ENCODE measurements at regions of chr19 and their contacts with region 1.

Region 1: GRCh38 chr19:53792721-53793433 is 31.2 kb downstream of the NLRP12 start:
- DNase-seq: peak; percentile 74 to 85
- ATAC-seq: peak in 3 of 4 donors; percentile 61 to 74 (median 68)
- H3K4me3 ChIP-seq: no peak overlapping the region
- H3K27ac ChIP-seq: no peak overlapping the region
- H3K4me1 ChIP-seq: no peaks in the 10 kb centered on the region
- H3K27me3 ChIP-seq: no peaks in the 10 kb centered on the region
- CTCF ChIP-seq: peak; percentile 83

Region 2: DNA sequence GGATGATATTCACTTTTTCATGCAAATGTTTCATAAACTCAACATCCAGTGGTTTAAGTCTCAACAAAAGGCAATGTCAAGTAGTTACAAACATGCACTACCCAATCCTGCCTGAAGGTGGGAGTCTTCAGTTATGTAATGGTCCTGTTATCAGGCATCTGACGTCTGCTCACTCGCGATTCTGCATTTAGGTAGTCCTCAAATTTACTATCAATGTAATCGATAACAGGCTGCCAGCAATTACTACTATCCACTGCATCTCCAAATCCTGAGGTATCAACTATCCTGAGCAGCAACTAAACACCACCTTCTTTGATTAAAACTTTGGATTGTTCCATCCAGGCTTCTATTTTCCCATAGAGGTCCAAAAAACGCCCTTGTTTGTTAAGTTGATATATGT is 19.9 kb before region 1 on chr19:
- intact Hi-C with region 1: loop called in 1 of 2 experiments (anchors 1 kb)
- DNase-seq: no peak
- ATAC-seq: no peak
- H3K4me3 ChIP-seq: no peak overlapping the region
- H3K27ac ChIP-seq: no peak overlapping the region
- H3K4me1 ChIP-seq: no peaks in the 10 kb centered on the region
- H3K27me3 ChIP-seq: no peaks in the 10 kb centered on the region
- CTCF ChIP-seq: peak; percentile 65